ENCODE measurements at regions of chr6 and their contacts with region 1.

Region 1: DNA sequence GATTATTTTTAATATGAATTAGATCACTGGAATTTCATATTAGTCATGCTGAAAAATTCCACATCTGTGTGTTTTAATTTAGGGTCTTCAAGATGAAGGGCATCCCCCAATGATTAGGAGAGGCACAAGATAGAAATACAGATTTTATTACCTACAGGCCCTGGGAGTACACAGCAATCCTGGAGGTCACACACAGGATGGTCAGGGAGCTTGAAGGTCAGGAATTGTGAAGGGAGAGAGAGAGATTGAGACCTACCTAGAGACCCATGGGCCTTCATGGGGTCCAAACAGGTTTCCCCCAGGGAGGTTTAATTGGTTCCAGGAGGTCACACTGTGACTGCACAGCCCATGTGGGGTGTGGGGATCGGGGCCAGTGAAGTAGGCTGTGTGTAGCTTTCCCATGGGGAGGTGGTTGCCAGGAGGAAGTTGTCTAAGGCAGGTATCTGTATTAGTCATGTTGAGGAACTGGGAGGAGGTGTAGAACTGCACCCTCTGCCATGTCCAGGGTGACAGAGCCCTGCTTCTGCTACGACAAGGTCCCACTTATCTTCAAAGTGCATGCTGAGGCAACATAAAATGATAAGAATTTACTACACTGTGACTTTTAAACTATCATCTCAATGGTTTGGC is 18.3 kb downstream of the SNX9 start:
- DNase-seq: peak; percentile 47
- ATAC-seq: peak; percentile 96
- H3K4me3 Mint-ChIP-seq: peak overlapping the region; percentile 58
- H3K27ac Mint-ChIP-seq: peak overlapping the region; percentile 57
- H3K4me1 Mint-ChIP-seq: peaks cover 89% of the 10 kb centered on the region
- H3K27me3 Mint-ChIP-seq: no peaks in the 10 kb centered on the region
- CTCF ChIP-seq: no peak

Region 2: DNA sequence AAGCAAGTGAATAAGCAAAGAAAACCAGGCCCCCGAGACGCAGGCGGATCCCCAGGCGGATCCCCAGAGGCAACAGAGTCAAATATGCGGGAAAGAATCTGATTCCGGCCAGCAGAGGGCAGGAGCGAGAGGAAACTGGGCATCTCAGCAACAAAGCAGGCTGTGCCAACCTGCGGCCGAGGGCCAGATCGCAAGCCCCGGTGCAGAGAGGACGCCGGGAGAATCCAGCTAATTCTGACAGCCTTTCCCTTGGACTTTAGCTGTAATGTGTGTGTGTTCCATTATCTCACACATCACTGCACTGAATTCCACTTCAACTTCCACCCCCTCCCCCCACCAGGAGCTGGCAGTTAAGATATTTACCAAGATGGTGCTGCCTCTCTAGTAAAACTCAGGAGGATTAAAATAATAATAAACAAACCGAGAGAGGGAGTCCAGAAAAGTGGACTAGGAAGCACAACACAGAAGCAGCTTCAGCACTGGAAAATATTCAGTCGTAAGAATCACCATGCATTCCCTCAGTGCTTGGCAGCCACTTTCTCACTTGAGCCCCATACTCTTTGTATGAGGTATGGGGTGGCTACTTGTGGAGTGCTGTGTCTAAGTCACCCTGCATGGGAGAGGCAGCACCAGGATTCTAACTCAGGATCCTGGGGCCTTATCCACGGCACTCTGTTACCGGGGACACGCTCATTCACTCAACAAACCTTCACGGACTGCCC is 84.5 kb before region 1 on chr6:
- CTCF ChIA-PET with region 1: interaction called, 5 read pairs
- POLR2A ChIA-PET with region 1: interaction called, 6 read pairs
- intact Hi-C with region 1: loop called (anchors 1 kb)
- DNase-seq: peak; percentile 72
- ATAC-seq: peak; percentile 54
- H3K4me3 Mint-ChIP-seq: peak overlapping the region; percentile 38
- H3K27ac Mint-ChIP-seq: no peak overlapping the region
- H3K4me1 Mint-ChIP-seq: peaks cover 69% of the 10 kb centered on the region
- H3K27me3 Mint-ChIP-seq: peaks cover 6% of the 10 kb centered on the region
- CTCF ChIP-seq: peak; percentile 60

Region 3: DNA sequence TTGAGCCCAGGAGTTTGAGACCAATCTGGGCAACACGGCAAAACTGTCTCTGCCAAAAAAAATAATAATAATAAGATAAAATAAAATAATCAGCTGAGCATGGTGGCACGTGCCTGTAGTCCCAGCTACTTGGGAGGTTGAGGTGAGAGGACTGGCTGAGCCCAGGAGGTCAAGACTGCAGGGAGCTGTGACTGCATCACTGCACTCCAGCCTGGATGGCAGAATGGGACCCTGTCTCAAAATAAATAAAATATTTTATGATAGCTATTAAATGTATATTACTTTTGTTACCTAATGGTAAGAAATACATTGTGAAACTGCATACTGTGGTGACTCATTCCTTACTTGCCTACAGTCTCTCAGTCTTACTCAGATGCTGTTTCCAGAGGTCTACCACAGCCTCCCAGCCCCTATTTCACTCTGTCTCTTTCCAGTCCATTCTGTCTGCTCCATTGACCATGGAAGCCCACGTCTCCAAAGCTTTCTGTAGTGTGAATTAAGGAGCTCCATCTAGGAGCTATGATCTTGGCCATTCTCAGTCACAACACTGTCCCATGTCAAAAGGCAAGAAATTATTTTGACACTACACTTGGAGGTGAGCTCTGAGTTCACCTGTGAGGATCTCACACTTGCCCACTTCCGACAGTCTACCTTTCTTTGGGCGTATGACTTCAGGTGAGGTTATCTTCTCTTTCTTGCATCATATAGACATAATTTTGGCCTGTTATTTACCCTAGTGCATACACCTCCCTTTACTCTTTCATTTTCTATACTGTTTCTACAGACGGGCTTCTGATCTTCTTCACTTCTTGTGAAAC is 40.7 kb before region 1 on chr6:
- CTCF ChIA-PET with region 1: no interaction called
- POLR2A ChIA-PET with region 1: no interaction called
- intact Hi-C with region 1: loop called (anchors 2 kb)
- DNase-seq: no peak
- ATAC-seq: peak; percentile 90
- H3K4me3 Mint-ChIP-seq: peak overlapping the region; percentile 66
- H3K27ac Mint-ChIP-seq: peak overlapping the region; percentile 70
- H3K4me1 Mint-ChIP-seq: peaks cover 37% of the 10 kb centered on the region
- H3K27me3 Mint-ChIP-seq: no peaks in the 10 kb centered on the region
- CTCF ChIP-seq: no peak

Region 4: DNA sequence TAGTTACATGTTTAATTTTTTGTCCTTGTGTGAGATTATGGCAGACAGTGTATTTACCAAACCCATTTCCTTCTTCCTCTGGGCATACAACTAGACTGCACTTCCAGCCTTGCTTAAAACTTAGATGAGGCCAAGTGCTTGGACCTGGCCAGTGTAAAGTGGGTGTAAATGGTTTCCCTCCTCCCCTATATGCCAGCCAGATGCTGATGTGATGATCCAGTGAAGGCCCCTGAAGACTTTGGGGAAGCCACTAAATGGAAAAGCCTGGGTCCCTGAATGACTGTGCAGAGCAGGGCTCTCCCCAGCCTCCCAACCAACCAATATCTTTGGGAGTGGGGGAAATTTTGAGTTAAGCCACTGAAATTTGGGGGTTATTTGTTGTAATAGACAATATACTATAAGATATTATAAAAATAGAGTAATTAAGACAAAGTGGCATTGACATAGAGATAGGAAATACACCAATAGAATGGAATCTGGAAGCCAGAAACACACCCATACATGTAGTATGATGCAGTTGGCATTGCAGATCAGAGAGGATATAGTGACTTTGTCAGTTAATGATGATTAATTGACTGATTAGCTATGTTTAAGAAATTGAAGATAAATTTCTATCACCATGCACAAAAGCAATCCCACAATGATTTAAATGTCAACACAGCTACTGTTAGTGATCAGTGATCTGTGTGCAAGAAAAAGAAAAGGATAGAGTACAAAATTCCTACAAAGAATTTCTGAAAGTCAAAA is 28.7 kb before region 1 on chr6:
- CTCF ChIA-PET with region 1: no interaction called
- POLR2A ChIA-PET with region 1: no interaction called
- intact Hi-C with region 1: no loop called
- DNase-seq: no peak
- ATAC-seq: no peak
- H3K4me3 Mint-ChIP-seq: no peak overlapping the region
- H3K27ac Mint-ChIP-seq: peak overlapping the region; percentile 47
- H3K4me1 Mint-ChIP-seq: peaks cover 43% of the 10 kb centered on the region
- H3K27me3 Mint-ChIP-seq: no peaks in the 10 kb centered on the region
- CTCF ChIP-seq: no peak

Region 5: GRCh38 chr6:157823001-157823527 is 18.3 kb before region 1 on chr6 and contains the start of gene SNX9:
- CTCF ChIA-PET with region 1: interaction called, 4 read pairs
- POLR2A ChIA-PET with region 1: interaction called, 6 read pairs
- intact Hi-C with region 1: loop called (anchors 1 kb)
- DNase-seq: peak; percentile 70
- ATAC-seq: peak; percentile 65
- H3K4me3 Mint-ChIP-seq: peak within 1 kb of the TSS; percentile 95
- H3K27ac Mint-ChIP-seq: peak within 1 kb of the TSS; percentile 98
- H3K4me1 Mint-ChIP-seq: peaks cover 47% of the 10 kb centered on the region
- H3K27me3 Mint-ChIP-seq: no peaks in the 10 kb centered on the region
- CTCF ChIP-seq: no peak
- total RNA-seq, gene SNX9: 38.8 and 40.0 TPM in 2 replicates

Region 6: GRCh38 chr6:157830354-157831017 is 10.8 kb before region 1 on chr6:
- CTCF ChIA-PET with region 1: no interaction called
- POLR2A ChIA-PET with region 1: interaction called, 15 read pairs
- intact Hi-C with region 1: loop called (anchors 1 kb)
- DNase-seq: no peak
- ATAC-seq: peak; percentile 60
- H3K4me3 Mint-ChIP-seq: peak overlapping the region; percentile 46
- H3K27ac Mint-ChIP-seq: peak overlapping the region; percentile 27
- H3K4me1 Mint-ChIP-seq: peaks cover 67% of the 10 kb centered on the region
- H3K27me3 Mint-ChIP-seq: no peaks in the 10 kb centered on the region
- CTCF ChIP-seq: no peak

Region 7: GRCh38 chr6:157853902-157854502 is 12.7 kb after region 1 on chr6:
- CTCF ChIA-PET with region 1: no interaction called
- POLR2A ChIA-PET with region 1: no interaction called
- intact Hi-C with region 1: loop called (anchors 2 kb)
- DNase-seq: no peak
- ATAC-seq: no peak
- H3K4me3 Mint-ChIP-seq: no peak overlapping the region
- H3K27ac Mint-ChIP-seq: no peak overlapping the region
- H3K4me1 Mint-ChIP-seq: peaks cover 51% of the 10 kb centered on the region
- H3K27me3 Mint-ChIP-seq: no peaks in the 10 kb centered on the region
- CTCF ChIP-seq: no peak

Region 8: GRCh38 chr6:157873735-157874344 is 32.5 kb after region 1 on chr6:
- CTCF ChIA-PET with region 1: interaction called, 22 read pairs
- POLR2A ChIA-PET with region 1: interaction called, 5 read pairs
- intact Hi-C with region 1: loop called (anchors 1 kb)
- DNase-seq: peak; percentile 73
- ATAC-seq: peak; percentile 87
- H3K4me3 Mint-ChIP-seq: no peak overlapping the region
- H3K27ac Mint-ChIP-seq: no peak overlapping the region
- H3K4me1 Mint-ChIP-seq: peaks cover 26% of the 10 kb centered on the region
- H3K27me3 Mint-ChIP-seq: no peaks in the 10 kb centered on the region
- CTCF ChIP-seq: peak; percentile 63

Region 9: GRCh38 chr6:158231551-158232315 is 390.4 kb after region 1 on chr6:
- CTCF ChIA-PET with region 1: no interaction called
- POLR2A ChIA-PET with region 1: no interaction called
- intact Hi-C with region 1: no loop called
- DNase-seq: peak; percentile 79
- ATAC-seq: peak; percentile 76
- H3K4me3 Mint-ChIP-seq: peak overlapping the region; percentile 92
- H3K27ac Mint-ChIP-seq: peak overlapping the region; percentile 87
- H3K4me1 Mint-ChIP-seq: peaks cover 34% of the 10 kb centered on the region
- H3K27me3 Mint-ChIP-seq: no peaks in the 10 kb centered on the region
- CTCF ChIP-seq: no peak

Measured in activated B cell treated with CpG ODN at 0.5 μM for 24 hours (primary cell).